ENCODE measurements at regions of chr12 and their contacts with region 1.

Region 1: GRCh38 chr12:6607751-6608591 is 792 bp upstream of the CHD4 start:
- DNase-seq: peak; percentile 84
- ATAC-seq: peak; percentile 60
- H3K4me3 Mint-ChIP-seq: no peak overlapping the region
- H3K27ac Mint-ChIP-seq: no peak overlapping the region
- H3K4me1 Mint-ChIP-seq: peaks cover 52% of the 10 kb centered on the region
- H3K27me3 Mint-ChIP-seq: no peaks in the 10 kb centered on the region

Region 2: DNA sequence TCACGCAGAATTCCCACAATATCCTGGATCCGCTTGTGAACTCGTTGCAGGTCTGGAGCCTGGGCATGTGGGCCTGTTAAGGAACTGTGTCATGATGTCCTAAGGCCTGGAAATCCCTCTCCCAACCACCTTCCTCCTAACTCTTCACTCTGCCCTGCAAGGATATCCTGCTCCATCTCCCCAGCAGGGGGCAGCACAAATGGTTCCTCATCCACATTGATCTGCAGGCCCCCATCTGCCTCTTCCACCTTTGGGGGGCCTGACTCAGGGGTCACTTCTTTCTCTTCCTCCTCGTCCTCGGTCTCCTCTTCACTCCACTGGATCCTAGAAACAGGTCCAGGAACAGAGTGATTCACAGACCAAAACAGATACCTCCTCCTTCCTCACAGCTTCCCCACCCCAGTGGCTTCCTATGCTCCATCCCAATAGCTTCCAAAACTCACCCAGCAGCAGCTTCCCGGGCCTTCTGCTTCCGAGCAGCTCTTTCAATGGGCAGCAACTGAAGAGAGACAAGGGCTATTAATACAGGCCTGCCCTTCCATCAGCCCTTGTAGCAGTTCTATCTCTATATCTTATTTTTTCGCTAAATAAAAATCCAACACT is 44.4 kb before region 1 on chr12:
- CTCF ChIA-PET with region 1: interaction called, 10 read pairs
- POLR2A ChIA-PET with region 1: interaction called, 3 read pairs
- intact Hi-C with region 1: loop called in 1 of 2 experiments (anchors 2 kb)
- DNase-seq: peak; percentile 82
- ATAC-seq: peak; percentile 37
- H3K4me3 Mint-ChIP-seq: no peak overlapping the region
- H3K27ac Mint-ChIP-seq: peak overlapping the region; percentile 17
- H3K4me1 Mint-ChIP-seq: peaks cover 40% of the 10 kb centered on the region
- H3K27me3 Mint-ChIP-seq: no peaks in the 10 kb centered on the region

Region 3: GRCh38 chr12:6662906-6663742 is 55.2 kb after region 1 on chr12 and contains the start of gene ING4:
- CTCF ChIA-PET with region 1: interaction called, 4 read pairs
- POLR2A ChIA-PET with region 1: interaction called, 8 read pairs
- intact Hi-C with region 1: loop called in 1 of 2 experiments (anchors 1 kb)
- DNase-seq: peak; percentile 98
- ATAC-seq: peak; percentile 98
- H3K4me3 Mint-ChIP-seq: peak within 1 kb of the TSS; percentile 84
- H3K27ac Mint-ChIP-seq: peak within 1 kb of the TSS; percentile 91
- H3K4me1 Mint-ChIP-seq: peaks cover 24% of the 10 kb centered on the region
- H3K27me3 Mint-ChIP-seq: no peaks in the 10 kb centered on the region
- total RNA-seq, gene ING4: 14.9 to 17.6 TPM

Region 4: DNA sequence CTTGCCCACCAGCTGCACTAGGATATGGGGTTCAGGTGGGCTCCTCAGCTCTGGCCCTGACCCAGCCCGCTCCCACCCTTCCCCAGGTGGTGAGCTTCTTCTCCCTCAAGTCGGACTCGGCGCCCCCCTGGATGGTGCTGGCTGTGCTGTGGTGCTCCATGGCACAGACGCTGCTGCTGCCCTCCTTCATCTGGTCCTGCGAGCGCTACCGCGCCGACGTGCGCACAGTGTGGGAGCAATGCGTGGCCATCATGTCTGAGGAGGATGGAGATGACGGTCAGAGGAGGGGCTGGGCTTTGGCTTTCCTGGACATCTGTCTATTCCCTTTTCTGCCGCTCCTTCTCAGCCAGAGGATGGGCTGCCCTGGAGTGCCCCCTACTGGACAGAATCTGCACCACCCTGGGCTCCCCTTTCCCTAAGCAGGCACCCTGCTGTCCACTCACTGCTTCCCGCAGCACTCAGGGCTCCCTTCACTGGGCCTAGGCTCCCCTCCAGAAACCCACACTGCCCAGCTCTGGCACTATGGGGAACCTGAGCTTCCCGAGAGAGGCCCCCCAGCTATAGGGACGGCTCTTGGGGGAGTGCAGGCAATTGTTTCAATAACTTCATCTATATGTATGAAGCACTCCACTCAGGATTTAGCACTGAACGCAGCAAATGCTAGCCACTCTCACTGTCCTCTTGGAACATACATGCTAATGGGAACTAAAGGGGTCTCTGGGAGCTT is 217.6 kb after region 1 on chr12:
- CTCF ChIA-PET with region 1: interaction called, 4 read pairs
- POLR2A ChIA-PET with region 1: no interaction called
- intact Hi-C with region 1: loop called in 1 of 2 experiments (anchors 5 kb)
- DNase-seq: peak; percentile 91
- ATAC-seq: peak; percentile 64
- H3K4me3 Mint-ChIP-seq: no peak overlapping the region
- H3K27ac Mint-ChIP-seq: peak overlapping the region; percentile 16
- H3K4me1 Mint-ChIP-seq: peaks cover 36% of the 10 kb centered on the region
- H3K27me3 Mint-ChIP-seq: peaks cover 32% of the 10 kb centered on the region

Region 5: GRCh38 chr12:6953442-6954315 is 345.7 kb after region 1 on chr12:
- CTCF ChIA-PET with region 1: no interaction called
- POLR2A ChIA-PET with region 1: interaction called, 4 read pairs
- intact Hi-C with region 1: loop called in 1 of 2 experiments (anchors 5 kb)
- DNase-seq: peak; percentile 87
- ATAC-seq: peak; percentile 33
- H3K4me3 Mint-ChIP-seq: peak overlapping the region; percentile 95
- H3K27ac Mint-ChIP-seq: peak overlapping the region; percentile 97
- H3K4me1 Mint-ChIP-seq: peaks cover 70% of the 10 kb centered on the region
- H3K27me3 Mint-ChIP-seq: no peaks in the 10 kb centered on the region

Region 6: DNA sequence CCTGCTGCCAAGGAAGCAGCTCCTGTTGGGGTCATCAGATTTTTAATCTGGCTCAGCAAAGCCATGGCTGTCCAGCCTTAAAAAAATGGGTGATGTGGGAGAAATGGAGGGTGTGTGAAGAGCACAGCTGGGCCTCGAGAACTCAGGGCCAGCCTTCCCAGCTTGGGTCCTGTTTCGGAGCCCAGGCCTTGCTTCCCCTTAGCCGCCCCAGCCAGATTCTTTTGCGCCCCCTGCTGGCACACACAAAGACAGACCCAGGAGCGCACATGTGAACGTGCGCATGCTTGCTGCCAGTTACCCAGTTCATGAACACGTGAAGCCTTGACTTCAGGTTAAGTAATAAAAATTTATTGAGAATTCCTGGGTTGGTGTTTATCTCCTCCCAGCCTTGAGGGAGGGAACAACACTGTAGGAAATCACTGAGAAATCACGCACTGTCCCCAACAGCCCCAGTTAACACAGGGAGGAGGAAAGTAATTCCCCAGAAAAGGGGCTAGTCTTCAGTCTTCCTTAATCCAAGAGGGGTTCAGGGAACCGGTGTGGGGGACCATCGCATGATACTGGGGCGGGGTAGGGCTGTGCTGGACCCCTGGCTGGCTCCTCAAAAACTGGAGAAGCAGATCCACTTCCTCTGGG is 357.2 kb after region 1 on chr12:
- CTCF ChIA-PET with region 1: no interaction called
- POLR2A ChIA-PET with region 1: no interaction called
- intact Hi-C with region 1: no loop called
- DNase-seq: peak; percentile 95
- ATAC-seq: peak; percentile 48
- H3K4me3 Mint-ChIP-seq: no peak overlapping the region
- H3K27ac Mint-ChIP-seq: peak overlapping the region; percentile 94
- H3K4me1 Mint-ChIP-seq: peaks cover 76% of the 10 kb centered on the region
- H3K27me3 Mint-ChIP-seq: no peaks in the 10 kb centered on the region

Region 7: DNA sequence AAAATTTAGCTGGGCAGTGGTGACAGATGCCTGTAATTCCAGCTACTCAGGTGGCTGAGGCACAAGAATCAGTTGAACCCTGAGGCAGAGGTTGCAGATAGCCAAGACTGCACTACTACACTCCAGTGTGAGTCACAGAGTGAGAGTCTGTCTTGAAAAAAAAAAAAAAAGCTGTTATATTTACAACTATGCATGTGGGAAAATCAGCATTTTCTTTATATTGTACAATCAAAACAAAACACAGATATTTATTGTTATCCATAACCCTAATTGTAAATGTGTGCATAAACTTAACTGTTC is 471.8 kb after region 1 on chr12:
- CTCF ChIA-PET with region 1: no interaction called
- POLR2A ChIA-PET with region 1: no interaction called
- intact Hi-C with region 1: no loop called
- DNase-seq: no peak
- ATAC-seq: no peak
- H3K4me3 Mint-ChIP-seq: no peak overlapping the region
- H3K27ac Mint-ChIP-seq: no peak overlapping the region
- H3K4me1 Mint-ChIP-seq: no peaks in the 10 kb centered on the region
- H3K27me3 Mint-ChIP-seq: peaks cover 2% of the 10 kb centered on the region